ENCODE measurements at regions of chr14 and their contacts with region 1.

Region 1: DNA sequence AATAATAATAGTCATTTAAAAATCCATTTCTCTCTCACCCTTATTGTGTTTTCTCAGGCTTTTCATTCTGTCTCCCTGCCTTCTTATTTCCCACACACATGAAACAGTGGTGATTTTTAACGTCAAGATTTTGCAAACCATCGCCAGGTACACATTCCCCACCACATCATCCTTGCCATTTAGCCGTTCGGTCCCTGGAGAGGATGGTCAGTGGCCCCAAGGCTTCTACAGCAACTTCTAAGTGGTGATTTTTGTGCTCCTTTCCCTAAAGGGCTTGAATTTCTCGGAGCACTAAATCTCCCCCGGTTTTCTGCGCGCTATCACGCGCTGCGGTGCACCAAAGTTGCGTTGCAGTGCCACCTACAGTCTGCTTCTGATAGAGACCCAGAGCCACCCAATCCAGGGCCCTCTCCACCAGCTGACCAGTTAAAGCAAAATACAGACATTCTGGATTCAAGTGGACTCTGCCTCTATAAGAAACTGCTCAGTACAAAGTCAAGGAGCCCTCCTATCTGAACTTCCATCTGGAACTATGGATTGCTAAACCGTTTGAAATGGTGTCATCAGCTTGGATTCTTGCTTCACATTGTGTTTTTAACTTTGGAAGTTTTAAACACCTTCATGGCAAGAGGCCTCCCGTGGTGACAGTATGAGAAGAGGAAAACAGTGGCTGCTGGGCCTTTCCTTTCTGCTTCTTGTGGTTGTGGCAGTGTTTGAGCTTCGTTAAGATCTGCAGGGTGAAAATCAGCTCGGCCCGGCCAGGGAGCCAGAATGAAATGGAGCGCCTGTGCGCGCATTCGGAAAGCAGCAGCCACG is 234.0 kb downstream of the SPTSSA start:
- DNase-seq: peak in 1 of 2 experiments; percentile 50
- H3K4me3 ChIP-seq: no peak overlapping the region; the same call in 1 of the 2 replicates
- H3K27ac ChIP-seq: no peak overlapping the region
- H3K4me1 ChIP-seq: peaks cover 5% of the 10 kb centered on the region; the same call in 1 of the 2 replicates
- H3K27me3 ChIP-seq: no peaks in the 10 kb centered on the region
- CTCF ChIP-seq: peak; percentile 80

Region 2: GRCh38 chr14:32576088-32576795 is 1651.8 kb before region 1 on chr14:
- CTCF ChIA-PET with region 1: no interaction called
- POLR2A ChIA-PET with region 1: no interaction called
- intact Hi-C with region 1: loop called (anchors 1 kb)
- DNase-seq: peak; percentile 15 to 39
- H3K4me3 ChIP-seq: no peak overlapping the region
- H3K27ac ChIP-seq: no peak overlapping the region
- H3K4me1 ChIP-seq: no peaks in the 10 kb centered on the region
- H3K27me3 ChIP-seq: no peaks in the 10 kb centered on the region
- CTCF ChIP-seq: peak; percentile 88

Region 3: GRCh38 chr14:33792720-33793368 is 435.2 kb before region 1 on chr14:
- CTCF ChIA-PET with region 1: no interaction called
- POLR2A ChIA-PET with region 1: no interaction called
- intact Hi-C with region 1: loop called (anchors 5 kb)
- DNase-seq: peak; percentile 37 to 61
- H3K4me3 ChIP-seq: peak overlapping the region; percentile 40; the same call in 1 of the 2 replicates
- H3K27ac ChIP-seq: no peak overlapping the region
- H3K4me1 ChIP-seq: no peaks in the 10 kb centered on the region; the same call in 1 of the 2 replicates
- H3K27me3 ChIP-seq: no peaks in the 10 kb centered on the region
- CTCF ChIP-seq: peak; percentile 86

Region 4: DNA sequence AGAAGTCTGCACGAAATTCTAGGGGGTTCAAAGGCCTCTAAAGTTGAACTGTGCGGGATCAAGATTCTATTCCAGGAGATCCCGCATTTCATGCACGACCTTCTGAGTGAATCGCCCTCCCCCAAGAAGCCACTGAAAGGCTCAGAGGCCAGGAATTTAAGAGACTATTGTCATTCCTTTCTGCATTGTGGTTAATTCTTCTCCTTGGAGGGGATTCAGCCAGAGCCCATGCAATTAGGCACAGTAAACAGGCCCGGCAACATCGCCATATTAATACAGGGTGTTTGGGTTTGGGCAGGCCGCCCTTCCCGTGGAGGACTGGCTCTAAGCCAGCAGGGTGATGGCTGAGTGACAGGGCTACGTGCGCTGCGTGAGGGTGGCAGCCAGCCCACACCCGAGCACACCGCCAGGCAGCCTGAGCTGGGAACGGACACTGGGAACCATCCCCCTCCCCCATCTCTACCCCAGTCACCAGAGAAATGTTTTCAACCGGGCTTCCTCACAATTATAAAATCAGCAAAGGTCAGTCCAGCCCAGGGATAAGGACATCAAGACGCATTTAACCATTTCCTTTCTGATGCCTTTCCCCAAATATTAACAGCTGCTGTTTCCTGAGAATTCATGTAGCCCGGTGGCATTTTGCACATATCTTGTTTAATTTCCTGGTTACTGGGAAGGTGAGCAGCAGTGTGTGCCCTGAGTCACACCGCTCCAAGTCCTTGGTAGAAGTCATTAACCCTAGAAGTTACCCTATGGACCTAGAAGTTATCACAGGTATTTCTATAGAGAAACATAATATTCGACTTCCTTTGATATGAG is 289.7 kb before region 1 on chr14:
- CTCF ChIA-PET with region 1: no interaction called
- POLR2A ChIA-PET with region 1: no interaction called
- intact Hi-C with region 1: loop called (anchors 10 kb)
- DNase-seq: peak; percentile 82 to 85
- H3K4me3 ChIP-seq: peak overlapping the region; percentile 51; the same call in 1 of the 2 replicates
- H3K27ac ChIP-seq: peak overlapping the region; percentile 85
- H3K4me1 ChIP-seq: peaks cover 45% of the 10 kb centered on the region
- H3K27me3 ChIP-seq: no peaks in the 10 kb centered on the region
- CTCF ChIP-seq: no peak

Region 5: GRCh38 chr14:34098045-34098984 is 129.7 kb before region 1 on chr14:
- CTCF ChIA-PET with region 1: interaction called, 6 read pairs
- POLR2A ChIA-PET with region 1: no interaction called
- intact Hi-C with region 1: loop called (anchors 5 kb)
- DNase-seq: peak; percentile 43 to 75
- H3K4me3 ChIP-seq: no peak overlapping the region
- H3K27ac ChIP-seq: no peak overlapping the region
- H3K4me1 ChIP-seq: peaks cover 29% of the 10 kb centered on the region
- H3K27me3 ChIP-seq: no peaks in the 10 kb centered on the region
- CTCF ChIP-seq: peak; percentile 75